Naive thymus-derived CD8-positive, alpha-beta T cell (primary cell): ENCODE measurements at regions of chr12 and their contacts with region 1.

Region 1: DNA sequence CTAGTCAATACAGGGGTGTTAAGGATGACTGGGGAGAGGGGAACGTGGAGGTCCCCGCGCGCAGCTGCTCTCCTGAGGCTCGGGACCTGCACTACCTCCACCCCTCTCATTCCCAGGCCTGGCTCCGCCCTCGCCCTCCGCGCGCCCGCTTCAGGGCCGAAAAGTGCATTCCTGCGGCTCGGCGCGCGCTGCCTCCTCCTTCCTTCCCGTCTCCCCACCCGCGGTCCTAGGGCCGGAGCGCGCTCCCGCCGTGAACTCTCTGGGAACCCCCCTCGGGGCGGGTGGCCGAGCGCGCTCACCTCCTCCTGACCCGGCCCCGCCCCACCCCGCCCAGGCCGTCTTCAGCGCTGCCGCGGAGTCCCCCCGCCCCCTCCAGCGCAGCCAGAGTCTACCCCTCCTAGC is 11.2 kb downstream of the RARG start:
- DNase-seq: peak; percentile 57 to 85 (median 68)
- ATAC-seq: peak; percentile 59 to 63
- H3K4me3 Mint-ChIP-seq: peak overlapping the region; percentile 91 to 100 (median 98)
- H3K27ac Mint-ChIP-seq: peak overlapping the region; percentile 91 to 98 (median 94)
- H3K4me1 Mint-ChIP-seq: peaks cover 62 to 80% (median 77%) of the 10 kb centered on the region in 4 donors
- H3K27me3 Mint-ChIP-seq: no peaks in the 10 kb centered on the region

Region 2: GRCh38 chr12:53200458-53201176 is 20.2 kb before region 1 on chr12:
- POLR2A ChIA-PET with region 1: interaction called, 54 read pairs
- DNase-seq: peak in 1 of 10 donors; percentile 41
- ATAC-seq: peak; percentile 56 to 60
- H3K4me3 Mint-ChIP-seq: peak overlapping the region; percentile 58 to 82 (median 76)
- H3K27ac Mint-ChIP-seq: peak overlapping the region; percentile 56 to 98 (median 90)
- H3K4me1 Mint-ChIP-seq: peaks cover 43 to 83% (median 77%) of the 10 kb centered on the region in 4 donors
- H3K27me3 Mint-ChIP-seq: no peaks in the 10 kb centered on the region

Region 3: GRCh38 chr12:53231826-53232645 is 11.2 kb after region 1 on chr12 and contains the start of gene RARG:
- POLR2A ChIA-PET with region 1: interaction called, 53 read pairs
- DNase-seq: peak in 9 of 10 donors; percentile 31 to 77 (median 55)
- ATAC-seq: peak; percentile 69 to 72
- H3K4me3 Mint-ChIP-seq: peak within 1 kb of the TSS; percentile 83 to 91 (median 88)
- H3K27ac Mint-ChIP-seq: peak within 1 kb of the TSS; percentile 66 to 91 (median 86)
- H3K4me1 Mint-ChIP-seq: peaks cover 36 to 75% (median 64%) of the 10 kb centered on the region in 4 donors
- H3K27me3 Mint-ChIP-seq: no peaks in the 10 kb centered on the region
- polyA plus RNA-seq, gene RARG: 1.6 to 12.7 (median 3.8) TPM

Region 4: GRCh38 chr12:53251477-53252348 is 30.9 kb after region 1 on chr12:
- POLR2A ChIA-PET with region 1: interaction called, 94 read pairs
- DNase-seq: peak; percentile 50 to 83 (median 72)
- ATAC-seq: peak; percentile 87 to 89
- H3K4me3 Mint-ChIP-seq: peak overlapping the region; percentile 92 to 99 (median 97)
- H3K27ac Mint-ChIP-seq: peak overlapping the region; percentile 90 to 99 (median 96)
- H3K4me1 Mint-ChIP-seq: peaks cover 27 to 52% (median 50%) of the 10 kb centered on the region in 4 donors
- H3K27me3 Mint-ChIP-seq: no peaks in the 10 kb centered on the region

Region 5: GRCh38 chr12:53295070-53295890 is 74.5 kb after region 1 on chr12 and contains the start of gene PFDN5:
- POLR2A ChIA-PET with region 1: interaction called, 22 read pairs
- DNase-seq: peak; percentile 72 to 94 (median 87)
- ATAC-seq: peak; percentile 90 to 93
- H3K4me3 Mint-ChIP-seq: peak within 1 kb of the TSS; percentile 95 to 100 (median 99)
- H3K27ac Mint-ChIP-seq: peak within 1 kb of the TSS; percentile 97 to 100 (median 99)
- H3K4me1 Mint-ChIP-seq: peaks cover 10 to 61% (median 46%) of the 10 kb centered on the region in 4 donors
- H3K27me3 Mint-ChIP-seq: no peaks in the 10 kb centered on the region
- polyA plus RNA-seq, gene PFDN5: 1,657 to 1,928 (median 1,896) TPM